ENCODE measurements at regions of chr6 and their contacts with region 1.

Region 1: DNA sequence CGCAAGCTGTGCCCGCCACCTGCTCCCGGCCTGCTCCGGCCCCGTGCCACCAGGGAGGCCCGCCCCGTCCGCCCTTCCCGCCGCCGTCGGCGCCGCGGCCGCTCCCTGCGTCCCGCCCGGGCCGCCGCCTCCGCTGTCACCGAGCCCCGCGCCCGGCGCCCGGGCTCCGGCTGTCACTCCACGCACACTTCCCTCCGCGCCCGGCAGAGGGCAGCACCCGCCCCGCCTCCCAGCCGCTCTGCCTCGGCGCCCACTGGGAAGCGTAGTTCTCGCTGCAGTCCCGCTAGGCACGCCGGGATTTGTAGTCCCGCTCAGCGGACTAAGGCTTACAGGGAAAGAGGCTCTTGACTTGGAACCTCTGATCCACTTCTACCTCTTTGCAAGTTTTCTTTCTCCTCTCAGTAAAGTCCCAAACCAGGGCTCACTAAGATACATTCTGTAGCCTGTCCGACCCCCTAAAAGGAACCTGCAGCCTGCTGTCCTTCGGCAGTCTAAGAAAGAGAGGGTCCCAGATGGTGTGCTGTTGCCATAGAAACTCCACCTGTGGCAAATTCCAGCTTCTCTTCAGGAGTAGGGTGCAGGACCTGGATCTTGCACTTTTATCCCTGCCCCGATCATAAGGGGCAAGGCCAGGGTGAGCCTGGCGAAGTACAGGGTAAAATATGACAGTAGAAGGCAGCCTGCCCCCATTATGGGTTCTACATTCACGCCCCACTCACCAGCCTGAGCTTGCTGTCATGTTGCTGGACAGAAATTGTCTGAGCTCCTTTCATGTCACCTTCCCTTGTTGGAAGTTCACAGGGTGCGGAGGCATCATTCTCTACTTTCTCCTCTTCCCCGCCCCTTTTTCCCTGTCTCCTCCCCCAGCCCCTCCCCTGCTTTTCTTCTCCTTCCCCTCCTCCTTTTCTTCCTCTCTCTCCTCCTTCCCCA is at the start of gene TFEB:
- DNase-seq: peak; percentile 87 to 96 (median 94)
- ATAC-seq: peak; percentile 68
- H3K4me3 ChIP-seq: peak within 1 kb of the TSS; percentile 73 to 75
- H3K4me3 Mint-ChIP-seq: peak within 1 kb of the TSS; percentile 88
- H3K27ac ChIP-seq: peak within 1 kb of the TSS; percentile 48 to 83
- H3K27ac Mint-ChIP-seq: peak within 1 kb of the TSS; percentile 76
- H3K4me1 ChIP-seq: peaks cover 39% of the 10 kb centered on the region
- H3K4me1 Mint-ChIP-seq: peaks cover 33% of the 10 kb centered on the region
- H3K27me3 ChIP-seq: no peaks in the 10 kb centered on the region
- H3K27me3 Mint-ChIP-seq: no peaks in the 10 kb centered on the region
- CTCF ChIP-seq: peak; percentile 67
- total RNA-seq, gene TFEB: 10.2 to 12.7 TPM

Region 2: GRCh38 chr6:41602864-41603608 is 132.7 kb before region 1 on chr6:
- CTCF ChIA-PET with region 1: no interaction called
- POLR2A ChIA-PET with region 1: no interaction called
- intact Hi-C with region 1: loop called in 1 of 2 experiments (anchors 2 kb)
- DNase-seq: peak; percentile 45 to 87 (median 74)
- ATAC-seq: peak; percentile 81
- H3K4me3 ChIP-seq: no peak overlapping the region
- H3K4me3 Mint-ChIP-seq: no peak overlapping the region
- H3K27ac ChIP-seq: no peak overlapping the region
- H3K27ac Mint-ChIP-seq: no peak overlapping the region
- H3K4me1 ChIP-seq: no peaks in the 10 kb centered on the region
- H3K4me1 Mint-ChIP-seq: peaks cover 5% of the 10 kb centered on the region
- H3K27me3 ChIP-seq: peaks cover 0 to 4% of the 10 kb centered on the region in 2 experiments
- H3K27me3 Mint-ChIP-seq: peaks cover 12% of the 10 kb centered on the region
- CTCF ChIP-seq: peak; percentile 62

Region 3: GRCh38 chr6:41697861-41698781 is 37.6 kb before region 1 on chr6:
- CTCF ChIA-PET with region 1: no interaction called
- POLR2A ChIA-PET with region 1: no interaction called
- intact Hi-C with region 1: no loop called
- DNase-seq: no peak
- ATAC-seq: no peak
- H3K4me3 ChIP-seq: no peak overlapping the region
- H3K4me3 Mint-ChIP-seq: no peak overlapping the region
- H3K27ac ChIP-seq: no peak overlapping the region
- H3K27ac Mint-ChIP-seq: no peak overlapping the region
- H3K4me1 ChIP-seq: no peaks in the 10 kb centered on the region
- H3K4me1 Mint-ChIP-seq: no peaks in the 10 kb centered on the region
- H3K27me3 ChIP-seq: no peaks in the 10 kb centered on the region
- H3K27me3 Mint-ChIP-seq: no peaks in the 10 kb centered on the region
- CTCF ChIP-seq: no peak

Region 4: DNA sequence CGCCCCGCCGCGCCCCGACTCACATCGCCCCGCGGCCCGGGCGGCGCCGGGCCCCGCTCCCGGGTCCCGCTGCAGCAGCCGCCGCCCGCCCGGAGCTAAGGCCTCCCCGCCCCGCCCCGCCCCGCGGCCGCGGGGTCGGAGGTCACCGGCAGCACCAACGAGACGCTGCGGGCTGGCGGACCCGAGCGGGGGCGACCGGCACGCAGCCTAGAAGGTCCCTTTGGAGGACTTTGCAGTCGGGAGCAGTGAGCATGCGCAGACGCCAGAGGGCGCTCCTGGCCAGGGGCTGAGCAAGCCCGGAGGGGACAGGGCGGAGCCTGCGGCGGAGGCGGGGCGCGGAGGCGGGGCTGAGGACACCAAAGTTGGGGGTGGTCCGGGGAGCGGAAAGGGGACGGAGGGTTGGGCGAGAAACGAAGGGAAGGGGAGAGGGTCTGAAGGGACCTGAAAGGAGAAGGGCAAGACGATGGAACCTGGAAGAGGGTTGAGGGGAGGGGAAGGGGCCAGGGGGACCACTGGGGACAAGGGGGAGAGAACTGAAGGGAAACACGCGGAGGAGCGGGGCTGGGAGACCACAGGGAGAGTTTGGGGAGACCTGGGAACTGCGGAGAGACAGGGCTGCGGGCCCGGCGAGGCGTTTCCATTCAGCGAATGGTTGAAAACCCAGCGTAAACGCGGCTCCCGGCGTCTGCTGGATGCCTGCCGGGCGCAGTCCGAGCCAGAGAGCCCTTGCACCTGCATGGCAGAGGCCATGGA is 44.3 kb after region 1 on chr6 and contains the start of gene FRS3:
- CTCF ChIA-PET with region 1: interaction called, 5 read pairs
- POLR2A ChIA-PET with region 1: no interaction called
- intact Hi-C with region 1: loop called (anchors 1 kb)
- DNase-seq: peak; percentile 96 to 100 (median 99)
- ATAC-seq: peak; percentile 97
- H3K4me3 ChIP-seq: peak within 1 kb of the TSS; percentile 73 to 93
- H3K4me3 Mint-ChIP-seq: peak within 1 kb of the TSS; percentile 93
- H3K27ac ChIP-seq: peak within 1 kb of the TSS in 1 of 2 experiments; percentile 23
- H3K27ac Mint-ChIP-seq: no peak within 1 kb of the TSS
- H3K4me1 ChIP-seq: peaks cover 18% of the 10 kb centered on the region
- H3K4me1 Mint-ChIP-seq: peaks cover 21% of the 10 kb centered on the region
- H3K27me3 ChIP-seq: no peaks in the 10 kb centered on the region
- H3K27me3 Mint-ChIP-seq: peaks cover 4% of the 10 kb centered on the region
- CTCF ChIP-seq: peak; percentile 74
- total RNA-seq, gene FRS3: 3.7 to 6.2 TPM

Region 5: DNA sequence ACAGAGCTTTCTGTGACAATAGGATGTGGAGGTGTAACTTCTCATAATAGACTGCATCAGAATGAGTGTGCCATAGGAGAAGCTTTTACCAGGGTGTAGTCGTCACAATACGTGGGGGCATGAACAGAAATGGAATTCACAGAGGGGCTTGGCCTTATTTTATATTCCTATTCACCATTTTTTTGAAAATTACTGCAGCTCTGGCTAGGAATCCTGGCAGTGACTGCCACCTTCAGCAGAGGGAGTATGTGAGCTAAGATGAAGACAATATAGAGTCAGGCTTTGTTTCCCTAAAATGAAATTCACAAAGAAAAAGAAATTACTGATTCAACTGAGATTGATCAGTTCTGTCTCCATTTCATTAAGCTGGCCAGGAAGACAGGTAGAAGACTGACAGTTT is 65.7 kb after region 1 on chr6:
- CTCF ChIA-PET with region 1: no interaction called
- POLR2A ChIA-PET with region 1: no interaction called
- intact Hi-C with region 1: no loop called
- DNase-seq: no peak
- ATAC-seq: no peak
- H3K4me3 ChIP-seq: no peak overlapping the region
- H3K4me3 Mint-ChIP-seq: no peak overlapping the region
- H3K27ac ChIP-seq: no peak overlapping the region
- H3K27ac Mint-ChIP-seq: no peak overlapping the region
- H3K4me1 ChIP-seq: no peaks in the 10 kb centered on the region
- H3K4me1 Mint-ChIP-seq: no peaks in the 10 kb centered on the region
- H3K27me3 ChIP-seq: no peaks in the 10 kb centered on the region
- H3K27me3 Mint-ChIP-seq: no peaks in the 10 kb centered on the region
- CTCF ChIP-seq: no peak

Region 6: DNA sequence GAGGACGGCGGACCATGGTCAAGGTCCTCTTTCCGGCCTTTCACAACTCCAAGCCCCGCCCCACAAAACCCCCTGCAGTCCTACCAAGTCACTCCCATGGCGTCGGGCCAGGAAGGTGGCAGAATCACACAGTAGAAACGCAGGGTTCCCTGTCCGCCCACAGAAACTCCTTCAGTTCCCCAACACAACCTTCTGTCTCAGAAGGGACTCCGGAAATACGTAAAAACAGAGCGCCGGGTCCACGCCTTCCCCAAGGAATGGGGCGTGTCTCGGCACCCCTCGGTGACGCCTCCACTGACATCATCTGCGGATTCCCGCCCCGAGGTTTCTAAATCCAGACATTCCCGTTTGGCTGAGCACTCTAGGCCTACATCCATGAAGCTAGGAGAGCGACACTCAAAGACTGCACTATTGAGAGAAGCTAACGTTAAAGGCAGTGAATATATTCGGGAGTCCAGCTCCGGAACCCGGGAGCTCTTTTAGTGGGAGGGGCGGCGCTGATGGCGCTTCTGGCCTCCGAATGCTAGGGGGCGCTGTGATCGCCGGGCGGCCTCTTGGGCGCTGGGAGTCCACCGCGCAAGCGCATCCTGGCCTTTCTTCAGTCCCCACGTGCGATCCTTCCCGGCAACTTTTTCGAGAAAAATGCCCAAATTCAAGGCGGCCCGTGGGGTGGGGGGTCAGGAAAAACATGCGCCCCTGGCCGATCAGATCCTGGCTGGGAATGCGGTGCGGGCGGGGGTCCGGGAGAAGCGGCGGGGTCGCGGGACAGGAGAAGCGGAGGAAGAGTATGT is 185.4 kb after region 1 on chr6 and contains the starts of genes BYSL and MED20:
- CTCF ChIA-PET with region 1: no interaction called
- POLR2A ChIA-PET with region 1: no interaction called
- intact Hi-C with region 1: loop called in 1 of 2 experiments (anchors 2 kb)
- DNase-seq: peak; percentile 86 to 98 (median 94)
- ATAC-seq: peak; percentile 92
- H3K4me3 ChIP-seq: peak within 1 kb of the TSS; percentile 96 to 97
- H3K4me3 Mint-ChIP-seq: peak within 1 kb of the TSS; percentile 100
- H3K27ac ChIP-seq: peak within 1 kb of the TSS; percentile 83 to 99
- H3K27ac Mint-ChIP-seq: peak within 1 kb of the TSS; percentile 100
- H3K4me1 ChIP-seq: peaks cover 32% of the 10 kb centered on the region
- H3K4me1 Mint-ChIP-seq: peaks cover 53% of the 10 kb centered on the region
- H3K27me3 ChIP-seq: no peaks in the 10 kb centered on the region
- H3K27me3 Mint-ChIP-seq: no peaks in the 10 kb centered on the region
- CTCF ChIP-seq: peak; percentile 97
- total RNA-seq, gene BYSL: 3.2 to 6.2 TPM
- total RNA-seq, gene MED20: 1.8 TPM

Region 7: GRCh38 chr6:42217519-42218367 is 482.1 kb after region 1 on chr6 and contains the start of gene MRPS10:
- CTCF ChIA-PET with region 1: interaction called, 3 read pairs
- POLR2A ChIA-PET with region 1: no interaction called
- intact Hi-C with region 1: loop called (anchors 1 to 2 kb)
- DNase-seq: peak; percentile 81 to 95 (median 91)
- ATAC-seq: peak; percentile 99
- H3K4me3 ChIP-seq: peak within 1 kb of the TSS; percentile 70 to 93
- H3K4me3 Mint-ChIP-seq: peak within 1 kb of the TSS; percentile 99
- H3K27ac ChIP-seq: peak within 1 kb of the TSS; percentile 63 to 74
- H3K27ac Mint-ChIP-seq: peak within 1 kb of the TSS; percentile 97
- H3K4me1 ChIP-seq: peaks cover 8% of the 10 kb centered on the region
- H3K4me1 Mint-ChIP-seq: peaks cover 25% of the 10 kb centered on the region
- H3K27me3 ChIP-seq: no peaks in the 10 kb centered on the region
- H3K27me3 Mint-ChIP-seq: no peaks in the 10 kb centered on the region
- CTCF ChIP-seq: no peak
- total RNA-seq, gene MRPS10: 17.0 to 17.4 TPM

Region 8: GRCh38 chr6:43516697-43517504 is 1781.2 kb after region 1 on chr6 and contains the starts of genes POLR1C and YIPF3:
- CTCF ChIA-PET with region 1: no interaction called
- POLR2A ChIA-PET with region 1: no interaction called
- intact Hi-C with region 1: loop called in 1 of 2 experiments (anchors 10 kb)
- DNase-seq: peak; percentile 90 to 98 (median 97)
- ATAC-seq: peak; percentile 96
- H3K4me3 ChIP-seq: peak within 1 kb of the TSS; percentile 91 to 98
- H3K4me3 Mint-ChIP-seq: no peak within 1 kb of the TSS
- H3K27ac ChIP-seq: peak within 1 kb of the TSS; percentile 83 to 94
- H3K27ac Mint-ChIP-seq: no peak within 1 kb of the TSS
- H3K4me1 ChIP-seq: peaks cover 34% of the 10 kb centered on the region
- H3K4me1 Mint-ChIP-seq: peaks cover 33% of the 10 kb centered on the region
- H3K27me3 ChIP-seq: no peaks in the 10 kb centered on the region
- H3K27me3 Mint-ChIP-seq: no peaks in the 10 kb centered on the region
- CTCF ChIP-seq: no peak
- total RNA-seq, gene POLR1C: 73.9 to 74.0 TPM
- total RNA-seq, gene YIPF3: 51.0 to 52.5 TPM